Activated CD4-positive, alpha-beta memory T cell treated with anti-CD3 and anti-CD28 coated beads, Interleukin-2, amount 10 ng/mL, durations not matched to agents 7 days and 5 days (primary cell): ENCODE measurements at regions of chr9 and their contacts with region 1.

Region 1: GRCh38 chr9:35664531-35665470 is at the start of gene ARHGEF39:
- DNase-seq: peak; percentile 87
- H3K4me3 Mint-ChIP-seq: peak within 1 kb of the TSS; percentile 80
- H3K27ac Mint-ChIP-seq: peak within 1 kb of the TSS; percentile 86
- H3K4me1 Mint-ChIP-seq: peaks cover 67% of the 10 kb centered on the region
- H3K27me3 Mint-ChIP-seq: no peaks in the 10 kb centered on the region
- total RNA-seq, gene ARHGEF39: 19.1 to 19.9 TPM

Region 2: GRCh38 chr9:35603987-35604577 is 60.7 kb before region 1 on chr9:
- CTCF ChIA-PET with region 1: interaction called, 16 read pairs
- POLR2A ChIA-PET with region 1: interaction called, 9 read pairs
- DNase-seq: peak; percentile 100
- H3K4me3 Mint-ChIP-seq: peak overlapping the region; percentile 96
- H3K27ac Mint-ChIP-seq: peak overlapping the region; percentile 99
- H3K4me1 Mint-ChIP-seq: peaks cover 30% of the 10 kb centered on the region
- H3K27me3 Mint-ChIP-seq: no peaks in the 10 kb centered on the region

Region 3: GRCh38 chr9:35616681-35617459 is 47.9 kb before region 1 on chr9:
- CTCF ChIA-PET with region 1: interaction called, 18 read pairs
- POLR2A ChIA-PET with region 1: interaction called, 83 read pairs
- DNase-seq: peak; percentile 74
- H3K4me3 Mint-ChIP-seq: peak overlapping the region; percentile 73
- H3K27ac Mint-ChIP-seq: peak overlapping the region; percentile 42
- H3K4me1 Mint-ChIP-seq: peaks cover 43% of the 10 kb centered on the region
- H3K27me3 Mint-ChIP-seq: peaks cover 3% of the 10 kb centered on the region

Region 4: GRCh38 chr9:35675732-35676392 is 11.1 kb after region 1 on chr9:
- CTCF ChIA-PET with region 1: interaction called, 19 read pairs
- POLR2A ChIA-PET with region 1: interaction called, 13 read pairs
- DNase-seq: no peak
- H3K4me3 Mint-ChIP-seq: no peak overlapping the region
- H3K27ac Mint-ChIP-seq: no peak overlapping the region
- H3K4me1 Mint-ChIP-seq: peaks cover 10% of the 10 kb centered on the region
- H3K27me3 Mint-ChIP-seq: peaks cover 32% of the 10 kb centered on the region

Region 5: GRCh38 chr9:35690431-35691333 is 25.9 kb after region 1 on chr9:
- CTCF ChIA-PET with region 1: interaction called, 60 read pairs
- POLR2A ChIA-PET with region 1: interaction called, 12 read pairs
- DNase-seq: peak; percentile 42
- H3K4me3 Mint-ChIP-seq: peak overlapping the region; percentile 75
- H3K27ac Mint-ChIP-seq: peak overlapping the region; percentile 21
- H3K4me1 Mint-ChIP-seq: peaks cover 24% of the 10 kb centered on the region
- H3K27me3 Mint-ChIP-seq: no peaks in the 10 kb centered on the region

Region 6: GRCh38 chr9:35748858-35749514 is 84.2 kb after region 1 on chr9 and contains the starts of genes GBA2 and RGP1:
- CTCF ChIA-PET with region 1: no interaction called
- POLR2A ChIA-PET with region 1: interaction called, 10 read pairs
- DNase-seq: peak; percentile 76
- H3K4me3 Mint-ChIP-seq: peak within 1 kb of the TSS; percentile 94
- H3K27ac Mint-ChIP-seq: peak within 1 kb of the TSS; percentile 91
- H3K4me1 Mint-ChIP-seq: peaks cover 52% of the 10 kb centered on the region
- H3K27me3 Mint-ChIP-seq: no peaks in the 10 kb centered on the region
- total RNA-seq, gene GBA2: 45.8 to 49.1 TPM
- total RNA-seq, gene RGP1: 29.1 to 29.5 TPM